ENCODE measurements at regions of chr19 and their contacts with region 1.

Region 1: GRCh38 chr19:4267101-4267900 is 11.8 kb upstream of the SHD start:
- DNase-seq: no peak
- H3K4me3 ChIP-seq: no peak overlapping the region
- CTCF ChIP-seq: peak; percentile 74

Region 2: DNA sequence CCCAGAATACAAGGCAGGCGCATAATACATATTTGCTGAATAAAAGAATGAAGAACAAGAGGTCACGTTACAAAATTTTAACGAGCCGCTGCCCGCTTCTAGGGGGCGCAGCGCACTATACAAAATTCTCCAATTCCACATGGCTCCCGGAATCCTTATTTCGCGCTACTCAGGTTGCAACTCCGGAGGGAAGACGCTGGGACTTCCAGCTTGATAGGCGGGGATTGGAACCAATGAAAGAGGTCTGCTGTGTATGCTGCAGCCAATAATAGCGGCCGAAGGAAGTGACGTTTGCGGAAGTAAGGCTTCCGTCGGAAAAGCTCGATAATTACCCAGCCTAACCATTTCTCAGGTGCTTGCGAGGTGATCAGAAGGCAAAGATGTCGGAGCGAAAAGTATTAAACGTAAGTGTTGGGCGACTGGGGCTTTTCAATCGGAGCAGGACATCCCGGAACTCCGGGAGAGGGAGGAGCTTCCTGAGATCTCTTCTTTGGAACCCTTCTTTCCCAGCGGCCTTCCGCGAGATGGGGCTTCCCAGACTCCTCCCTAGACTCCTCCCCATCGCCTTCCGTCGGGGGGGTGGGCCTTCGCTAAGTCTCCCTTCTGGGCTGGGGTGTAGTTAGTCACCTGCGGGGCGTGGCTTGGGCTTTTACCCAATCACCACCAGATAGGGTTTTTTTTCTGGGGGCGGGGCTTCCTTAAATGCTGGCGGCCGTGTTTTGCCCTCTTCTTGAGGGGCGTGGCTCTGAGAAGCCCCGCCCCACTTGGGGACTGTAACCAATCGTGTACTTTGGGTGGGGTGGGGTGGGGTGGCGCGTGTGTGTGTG is 20.3 kb before region 1 on chr19 and contains the start of gene YJU2:
- CTCF ChIA-PET with region 1: interaction called, 10 read pairs
- POLR2A ChIA-PET with region 1: no interaction called
- DNase-seq: peak; percentile 97
- H3K4me3 ChIP-seq: peak within 1 kb of the TSS; percentile 87
- CTCF ChIP-seq: peak; percentile 52

Region 3: GRCh38 chr19:4256563-4256962 is 10.7 kb before region 1 on chr19:
- CTCF ChIA-PET with region 1: interaction called, 22 read pairs
- POLR2A ChIA-PET with region 1: no interaction called
- DNase-seq: no peak
- H3K4me3 ChIP-seq: no peak overlapping the region
- CTCF ChIP-seq: no peak

Region 4: GRCh38 chr19:4278419-4279266 is 11.3 kb after region 1 on chr19 and contains the start of gene SHD:
- CTCF ChIA-PET with region 1: interaction called, 77 read pairs
- POLR2A ChIA-PET with region 1: no interaction called
- DNase-seq: no peak
- H3K4me3 ChIP-seq: no peak within 1 kb of the TSS
- CTCF ChIP-seq: no peak

Region 5: GRCh38 chr19:4342615-4343369 is 75.5 kb after region 1 on chr19:
- CTCF ChIA-PET with region 1: interaction called, 28 read pairs
- POLR2A ChIA-PET with region 1: no interaction called
- DNase-seq: peak; percentile 100
- H3K4me3 ChIP-seq: peak overlapping the region; percentile 89
- CTCF ChIP-seq: peak; percentile 38

Region 6: DNA sequence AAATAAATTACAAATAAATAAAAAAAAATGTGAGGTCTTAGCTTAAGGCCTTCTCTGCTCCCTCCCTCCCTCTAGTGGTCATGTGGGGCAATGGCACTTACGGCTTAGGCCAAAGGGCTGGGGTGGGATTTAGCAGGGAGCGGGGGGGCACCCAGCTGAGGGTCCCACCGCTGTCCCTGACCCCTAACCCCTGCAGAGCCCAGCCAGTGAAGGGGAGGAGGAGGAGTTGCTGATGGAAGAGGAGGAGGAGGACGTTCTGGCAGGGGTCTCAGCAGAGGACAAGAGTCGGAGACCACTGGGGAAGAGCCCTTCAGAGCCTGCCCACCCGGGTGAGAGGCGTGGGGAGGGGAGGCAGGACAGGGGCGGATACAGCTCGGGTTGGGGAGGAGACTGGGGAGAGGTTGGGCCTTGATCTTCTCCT is 85.4 kb after region 1 on chr19:
- CTCF ChIA-PET with region 1: interaction called, 61 read pairs
- POLR2A ChIA-PET with region 1: no interaction called
- DNase-seq: no peak
- H3K4me3 ChIP-seq: no peak overlapping the region
- CTCF ChIP-seq: peak; percentile 72

Region 7: DNA sequence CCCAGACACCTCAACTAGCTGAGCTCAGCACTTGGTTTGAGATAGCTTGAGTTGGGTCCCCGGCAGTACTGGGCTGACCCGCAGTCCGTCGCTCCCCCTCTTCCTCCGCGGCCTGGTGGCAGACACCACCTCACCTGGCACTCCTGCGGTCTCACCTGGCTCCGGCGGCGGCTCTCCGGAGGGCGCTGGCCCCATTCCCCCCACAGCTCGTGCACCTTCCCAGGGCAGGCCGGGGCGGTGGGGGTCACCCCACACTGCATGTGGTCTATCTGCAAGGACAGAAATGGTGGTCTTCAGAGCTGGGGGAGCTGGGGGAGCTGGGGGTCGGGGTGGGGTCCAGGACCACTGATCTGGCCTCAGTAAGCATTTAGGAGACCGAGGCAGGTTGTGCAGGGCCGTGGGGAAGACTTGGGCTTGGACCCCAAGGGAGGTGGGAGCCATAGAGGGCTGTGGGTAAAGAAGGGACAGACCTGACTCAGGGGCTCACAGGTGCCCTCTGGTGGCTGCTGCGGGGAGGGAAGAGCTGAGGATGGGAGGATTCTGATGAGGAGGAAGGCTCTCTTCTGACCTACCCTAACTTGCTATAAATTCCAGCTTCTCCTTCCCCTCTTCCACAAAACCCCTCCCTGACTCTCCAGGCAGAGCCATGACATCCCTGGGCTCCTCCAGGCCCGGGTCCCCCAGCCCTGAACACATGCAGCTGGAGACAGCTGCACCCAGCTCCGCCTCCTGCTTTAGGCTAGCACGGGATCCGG is 257.7 kb after region 1 on chr19:
- CTCF ChIA-PET with region 1: interaction called, 32 read pairs
- POLR2A ChIA-PET with region 1: no interaction called
- DNase-seq: no peak
- H3K4me3 ChIP-seq: no peak overlapping the region
- CTCF ChIP-seq: peak; percentile 83

Measured in AG04449 (cell line).